Activated CD4-positive, alpha-beta memory T cell treated with anti-CD3 and anti-CD28 coated beads for 36 hours (primary cell): ENCODE measurements at regions of chr6 and their contacts with region 1.

Region 1: DNA sequence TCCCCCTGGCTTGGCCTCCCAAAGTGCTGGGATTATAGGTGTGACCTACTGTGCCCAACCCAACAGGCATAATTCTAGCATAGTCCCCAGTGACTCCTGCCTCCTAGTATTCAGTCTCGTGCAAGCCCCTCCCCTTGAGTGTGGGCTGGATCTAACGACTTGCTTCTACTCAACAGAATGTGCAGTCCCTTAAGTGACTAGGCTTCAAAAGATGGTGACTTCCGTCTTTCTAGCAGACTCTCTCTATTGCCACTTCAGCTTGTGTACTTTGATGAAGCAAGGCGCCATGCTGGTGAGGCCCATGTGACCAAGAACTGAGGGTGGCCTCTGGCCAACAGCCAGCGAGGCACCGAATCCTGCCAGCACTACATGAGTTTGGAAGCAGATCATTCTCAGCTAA is 109.6 kb upstream of the TRAF3IP2 start:
- DNase-seq: peak; percentile 70
- H3K4me3 Mint-ChIP-seq: no peak overlapping the region
- H3K27ac Mint-ChIP-seq: peak overlapping the region; percentile 83
- H3K4me1 Mint-ChIP-seq: peaks cover 90% of the 10 kb centered on the region
- H3K27me3 Mint-ChIP-seq: no peaks in the 10 kb centered on the region

Region 2: GRCh38 chr6:111997078-111997852 is 281.9 kb after region 1 on chr6:
- CTCF ChIA-PET with region 1: interaction called, 28 read pairs
- POLR2A ChIA-PET with region 1: no interaction called
- intact Hi-C with region 1: loop called (anchors 1 kb)
- DNase-seq: peak; percentile 87
- H3K4me3 Mint-ChIP-seq: peak overlapping the region; percentile 48
- H3K27ac Mint-ChIP-seq: peak overlapping the region; percentile 28
- H3K4me1 Mint-ChIP-seq: peaks cover 48% of the 10 kb centered on the region
- H3K27me3 Mint-ChIP-seq: no peaks in the 10 kb centered on the region